ENCODE measurements at regions of chr17 and their contacts with region 1.

Region 1: DNA sequence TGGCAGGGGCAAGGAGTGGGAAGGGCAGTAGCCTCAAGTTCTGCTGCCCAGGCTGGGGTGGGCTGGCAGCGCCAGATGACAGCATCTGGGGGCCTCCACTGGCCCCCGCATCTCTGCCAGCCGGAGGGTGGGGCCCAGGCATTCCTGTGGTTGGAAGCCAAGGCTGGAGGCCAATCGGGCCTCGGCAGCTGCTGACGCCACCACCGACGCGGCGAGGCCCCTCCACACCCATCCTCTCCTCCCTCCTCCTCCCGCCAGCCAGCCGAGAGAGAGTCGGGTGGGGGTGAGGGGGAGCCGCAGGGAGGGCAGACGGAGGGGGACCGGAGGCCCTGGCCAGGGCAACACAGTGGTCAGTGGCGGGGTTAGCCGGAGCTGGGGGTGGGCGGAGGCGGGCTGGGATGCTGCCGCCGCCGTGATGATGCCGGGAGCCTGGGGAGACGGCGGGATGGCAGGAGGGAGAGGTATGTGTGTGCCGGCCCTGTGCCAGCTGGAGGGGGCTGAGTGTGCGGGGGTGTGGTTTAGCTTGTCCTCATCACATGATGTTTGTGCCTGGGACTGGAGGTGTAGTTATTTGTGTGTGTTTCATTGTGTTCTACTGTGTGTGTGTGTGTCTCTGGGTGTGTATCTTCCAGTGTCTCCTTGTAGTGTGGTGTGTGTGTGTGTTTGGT is 36.6 kb downstream of the ARHGAP23 start:
- DNase-seq: peak; percentile 81
- ATAC-seq: peak; percentile 77 to 85
- H3K4me3 ChIP-seq: peak overlapping the region; percentile 43
- H3K27ac ChIP-seq: peak overlapping the region; percentile 77 to 88
- H3K4me1 ChIP-seq: peaks cover 35% of the 10 kb centered on the region
- CTCF ChIP-seq: no peak
- EP300 ChIP-seq: no peak
- POLR2A ChIP-seq: no peak
- RAD21 ChIP-seq: no peak

Region 2: DNA sequence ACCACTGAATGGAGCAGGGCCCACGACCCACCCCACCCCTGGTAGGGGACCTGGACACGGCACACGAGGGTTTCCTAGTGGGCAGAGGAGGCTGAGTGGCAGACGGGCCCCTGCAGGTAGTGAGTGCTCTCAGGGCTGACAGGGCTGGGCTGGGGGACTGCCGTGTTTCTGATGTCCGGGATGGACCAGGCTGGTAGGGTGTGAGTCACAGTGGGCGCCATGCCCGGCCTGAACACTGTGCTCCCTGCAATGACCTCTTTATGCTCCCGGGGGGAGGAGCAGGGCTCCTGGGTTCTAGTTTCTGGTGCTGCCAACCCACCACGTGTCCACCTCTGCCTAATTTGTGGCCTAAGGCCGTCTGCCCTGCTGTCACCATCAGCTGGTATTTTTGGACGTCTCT is 10.3 kb before region 1 on chr17:
- CTCF ChIA-PET with region 1: interaction called, 12 read pairs
- POLR2A ChIA-PET with region 1: no interaction called
- DNase-seq: peak; percentile 79 to 97
- ATAC-seq: peak; percentile 65 to 84
- H3K4me3 ChIP-seq: peak overlapping the region; percentile 60
- H3K27ac ChIP-seq: peak overlapping the region; percentile 78 to 96
- H3K4me1 ChIP-seq: peaks cover 61% of the 10 kb centered on the region
- CTCF ChIP-seq: no peak
- EP300 ChIP-seq: no peak
- POLR2A ChIP-seq: no peak
- RAD21 ChIP-seq: no peak